Astrocyte of the cerebellum (primary cell): ENCODE measurements at regions of chr4 and their contacts with region 1.

Region 1: DNA sequence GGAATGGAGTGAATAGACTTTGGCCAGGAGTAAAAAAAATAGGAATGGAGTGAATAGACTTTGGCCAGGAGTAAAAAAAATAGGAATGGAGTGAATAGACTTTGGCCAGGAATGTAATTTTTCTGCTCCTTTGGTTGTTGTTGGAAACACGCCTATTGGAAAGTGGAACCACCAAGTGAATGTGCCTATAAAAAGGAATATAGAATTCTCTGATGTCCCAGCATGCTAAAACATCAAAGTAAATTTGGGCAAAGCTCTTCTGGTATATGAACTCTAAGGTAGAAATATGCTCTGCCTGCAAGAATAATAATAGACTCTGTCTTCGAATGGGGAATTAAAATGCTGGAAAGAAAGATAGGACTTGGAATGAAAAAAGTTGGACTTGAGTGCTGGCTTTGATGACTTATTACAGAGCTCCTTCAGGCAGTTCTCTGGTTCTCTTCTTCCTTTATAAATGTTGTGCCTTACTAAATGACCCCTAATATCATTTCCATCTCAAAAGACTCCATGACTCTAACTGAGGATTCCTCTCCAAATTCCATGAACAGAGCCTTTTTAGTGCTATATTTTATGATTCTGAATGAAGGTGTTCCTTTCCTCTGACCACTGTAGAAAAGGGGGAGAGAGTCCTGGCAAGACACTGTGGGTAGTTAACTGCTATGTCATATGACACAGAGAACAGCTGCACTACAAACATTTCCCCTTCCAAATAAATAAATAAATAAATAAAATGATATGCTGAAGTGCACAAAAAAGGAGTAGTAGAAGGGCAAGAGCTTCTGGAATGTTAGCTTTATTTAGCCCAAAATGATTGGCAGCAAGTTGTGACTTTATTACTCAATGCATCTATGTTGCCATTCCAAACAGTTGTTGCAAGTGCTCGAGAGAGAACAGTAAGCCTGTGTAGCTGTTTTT is 13.5 kb upstream of the GBA3 start:
- DNase-seq: peak; percentile 53
- H3K4me3 ChIP-seq: no peak overlapping the region
- CTCF ChIP-seq: no peak

Region 2: DNA sequence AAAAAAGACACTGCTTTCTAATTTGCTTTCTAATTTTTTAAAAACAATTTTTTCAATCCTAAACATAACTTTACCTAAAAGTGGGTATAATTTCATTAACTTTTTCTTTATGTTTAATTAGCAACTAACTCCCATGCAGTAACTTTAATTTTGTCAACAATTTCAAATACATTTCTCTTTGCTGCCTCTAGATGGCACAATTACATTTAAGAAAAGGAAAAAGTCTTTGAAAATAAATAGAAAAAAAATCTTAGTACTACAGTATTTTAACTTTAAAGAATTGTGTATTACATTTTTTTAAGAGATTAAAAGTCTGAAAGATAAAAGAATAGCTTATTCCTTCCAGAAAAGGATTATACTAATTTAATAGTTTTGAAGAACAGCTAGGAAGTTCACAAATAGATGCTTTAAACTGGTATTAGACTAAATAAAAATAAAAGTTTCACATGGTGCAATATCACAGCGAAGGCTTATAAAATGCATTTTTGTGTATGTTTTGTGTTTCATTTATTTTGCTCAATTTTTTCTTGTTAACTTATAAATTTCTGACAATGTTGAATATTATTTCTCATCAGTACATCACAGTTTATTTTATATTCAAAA is 268.5 kb before region 1 on chr4:
- in situ Hi-C with region 1: loop called (anchors 25 kb)
- DNase-seq: no peak
- H3K4me3 ChIP-seq: no peak overlapping the region
- CTCF ChIP-seq: no peak

Region 3: DNA sequence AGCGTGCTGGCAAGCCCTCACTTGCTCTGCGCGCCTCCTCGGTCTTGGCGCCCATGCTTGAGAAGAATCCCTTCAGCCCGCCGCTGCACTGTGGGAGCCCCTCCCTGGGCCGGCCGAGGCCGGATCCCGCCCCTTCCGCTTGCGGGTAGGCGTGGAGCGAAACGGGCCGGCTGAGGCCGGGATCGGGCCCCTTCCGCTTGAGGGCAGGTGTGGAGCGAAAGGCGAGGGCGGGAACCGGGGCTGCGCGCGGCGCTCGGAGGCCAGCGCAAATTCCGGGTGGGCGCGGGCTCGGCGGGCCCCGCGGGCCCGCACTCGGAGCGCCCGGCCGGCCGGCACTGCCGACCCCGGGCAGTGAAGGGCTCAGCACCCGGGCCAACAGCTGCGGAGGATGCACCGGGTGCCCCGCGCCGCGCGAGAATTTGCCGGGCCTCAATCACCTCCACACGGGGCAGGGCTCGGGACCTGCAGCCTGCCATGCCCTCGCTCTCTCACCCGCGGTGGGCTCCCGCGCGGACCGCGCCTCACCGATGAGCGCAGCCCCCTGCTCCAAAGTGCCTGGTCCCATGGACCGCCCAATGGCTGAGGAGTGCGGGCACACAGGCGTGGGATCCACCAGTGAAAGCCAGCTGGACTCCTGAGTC is 44.5 kb before region 1 on chr4:
- in situ Hi-C with region 1: no loop called
- DNase-seq: no peak
- H3K4me3 ChIP-seq: no peak overlapping the region
- CTCF ChIP-seq: no peak

Region 4: GRCh38 chr4:22739968-22740367 is 60.8 kb after region 1 on chr4:
- in situ Hi-C with region 1: no loop called
- DNase-seq: no peak
- H3K4me3 ChIP-seq: no peak overlapping the region
- CTCF ChIP-seq: no peak

Region 5: GRCh38 chr4:23348789-23349498 is 669.7 kb after region 1 on chr4:
- in situ Hi-C with region 1: no loop called
- DNase-seq: no peak
- H3K4me3 ChIP-seq: no peak overlapping the region
- CTCF ChIP-seq: no peak